PC-3 (cell line): ENCODE measurements at regions of chr1 and their contacts with region 1.

Region 1: DNA sequence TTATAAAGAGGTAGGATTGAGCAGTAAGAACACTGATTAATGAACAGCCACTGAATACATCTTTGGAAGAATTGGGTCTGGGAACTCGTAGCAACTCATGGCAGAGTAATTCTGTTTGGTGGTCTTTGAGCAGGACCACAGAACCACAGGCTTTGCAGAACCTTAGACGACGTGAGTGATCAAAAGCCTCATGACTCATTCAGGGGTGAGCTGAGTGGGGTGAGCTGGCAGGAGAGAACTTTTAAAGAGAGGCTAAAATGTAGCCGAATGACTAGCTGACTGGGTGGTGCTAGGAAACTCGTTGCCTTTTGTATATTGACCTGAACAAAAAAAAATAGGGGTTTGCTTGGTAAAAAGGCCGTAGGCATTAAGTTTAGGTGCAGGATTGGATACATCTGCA is 313.8 kb downstream of the TGFB2 start:
- DNase-seq: peak; percentile 95
- ATAC-seq: peak; percentile 72
- H3K4me3 ChIP-seq: no peak overlapping the region
- H3K27ac ChIP-seq: peak overlapping the region; percentile 71
- H3K4me1 ChIP-seq: peaks cover 64% of the 10 kb centered on the region
- H3K27me3 ChIP-seq: no peaks in the 10 kb centered on the region
- CTCF ChIP-seq: no peak

Region 2: DNA sequence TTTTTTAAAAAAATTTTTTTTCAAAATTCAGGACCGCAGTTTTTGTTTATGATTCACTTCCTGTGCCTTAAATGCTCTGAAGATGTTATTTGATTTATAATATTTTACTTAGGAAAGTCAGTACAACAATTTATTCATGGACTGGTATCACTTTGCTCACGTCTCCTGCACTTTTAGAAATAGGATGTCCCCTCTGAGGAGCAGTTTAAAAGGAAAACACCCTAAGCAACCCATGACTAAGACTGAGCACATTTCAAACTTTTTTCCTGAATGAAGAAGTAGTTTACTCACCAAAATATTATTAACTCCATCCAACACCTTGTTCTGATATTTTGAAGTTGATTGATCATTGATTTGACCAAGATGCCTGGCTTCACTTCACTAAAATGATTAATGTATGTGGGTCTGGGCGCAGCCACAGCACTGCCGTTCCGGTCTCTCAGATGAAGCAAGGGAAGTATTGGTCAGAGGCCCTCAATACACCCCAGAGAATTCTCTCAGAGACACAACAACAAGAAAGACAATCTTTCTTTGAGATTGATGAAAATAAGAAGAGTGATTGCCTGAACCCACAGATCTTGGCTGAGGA is 89.8 kb before region 1 on chr1:
- CTCF ChIA-PET with region 1: no interaction called
- POLR2A ChIA-PET with region 1: no interaction called
- intact Hi-C with region 1: no loop called
- DNase-seq: no peak
- ATAC-seq: no peak; the same call in 1 of the 2 replicates
- H3K4me3 ChIP-seq: no peak overlapping the region
- H3K27ac ChIP-seq: no peak overlapping the region
- H3K4me1 ChIP-seq: peaks cover 7% of the 10 kb centered on the region
- H3K27me3 ChIP-seq: no peaks in the 10 kb centered on the region
- CTCF ChIP-seq: no peak

Region 3: DNA sequence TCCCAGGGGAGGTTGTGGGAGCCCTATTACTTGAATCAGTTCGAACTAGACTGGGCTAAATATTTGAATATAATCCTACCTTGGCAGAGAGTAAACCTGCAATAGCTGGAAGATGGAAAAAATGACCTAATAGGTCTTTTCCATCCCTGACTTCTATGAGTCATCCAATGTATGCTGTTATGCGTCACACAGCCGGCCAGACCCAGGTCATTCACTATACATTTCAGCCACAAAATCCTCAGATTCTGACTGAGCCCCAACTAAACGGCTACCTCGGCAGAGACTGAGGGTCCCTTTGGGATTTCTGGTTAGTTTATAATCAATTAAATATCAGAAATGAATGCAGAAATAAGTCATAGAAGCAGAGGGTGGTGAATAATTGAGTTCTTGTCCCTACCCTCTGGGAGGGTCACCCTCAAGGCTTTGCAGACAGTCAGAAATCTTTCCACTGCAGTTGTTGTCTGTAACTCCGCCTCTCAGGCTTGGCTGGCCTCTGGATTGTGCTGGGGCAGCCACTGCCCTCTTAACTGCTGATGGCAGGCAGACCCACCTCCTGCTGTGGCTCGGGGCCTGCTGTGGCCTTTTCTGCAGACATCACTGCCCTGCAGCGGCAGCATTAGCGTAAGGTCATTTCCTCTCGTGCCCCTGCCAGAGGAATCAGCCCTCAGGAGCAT is 73.3 kb before region 1 on chr1:
- CTCF ChIA-PET with region 1: no interaction called
- POLR2A ChIA-PET with region 1: no interaction called
- intact Hi-C with region 1: loop called (anchors 2 kb)
- DNase-seq: peak; percentile 99
- ATAC-seq: peak; percentile 87
- H3K4me3 ChIP-seq: peak overlapping the region; percentile 28; the same call in 1 of the 2 replicates
- H3K27ac ChIP-seq: peak overlapping the region; percentile 92
- H3K4me1 ChIP-seq: peaks cover 34% of the 10 kb centered on the region
- H3K27me3 ChIP-seq: no peaks in the 10 kb centered on the region
- CTCF ChIP-seq: no peak

Region 4: DNA sequence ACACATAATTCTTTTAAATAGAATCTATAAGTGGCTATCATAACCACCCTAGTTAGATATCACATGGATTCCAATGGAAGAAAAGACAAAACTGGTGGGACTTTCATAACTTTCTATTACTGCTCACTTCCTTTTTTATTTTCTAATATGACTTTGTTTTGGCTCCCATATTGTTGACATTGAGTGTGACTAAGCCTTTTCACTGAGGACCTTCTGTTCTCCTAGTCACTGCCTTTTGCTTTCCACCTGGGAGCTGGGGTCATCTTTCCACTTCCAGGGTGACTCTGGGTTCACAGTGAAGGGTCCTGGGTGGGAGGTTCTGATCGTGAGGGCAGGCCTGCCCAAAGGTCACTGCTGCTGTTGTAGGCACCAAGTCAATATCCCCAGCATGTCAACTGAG is 37.9 kb before region 1 on chr1:
- CTCF ChIA-PET with region 1: no interaction called
- POLR2A ChIA-PET with region 1: no interaction called
- intact Hi-C with region 1: loop called (anchors 1 kb)
- DNase-seq: peak; percentile 87
- ATAC-seq: peak; percentile 99
- H3K4me3 ChIP-seq: no peak overlapping the region
- H3K27ac ChIP-seq: peak overlapping the region; percentile 57
- H3K4me1 ChIP-seq: peaks cover 14% of the 10 kb centered on the region
- H3K27me3 ChIP-seq: no peaks in the 10 kb centered on the region
- CTCF ChIP-seq: no peak